Activated naive CD4-positive, alpha-beta T cell treated with anti-CD3 and anti-CD28 coated beads for 36 hours (primary cell): ENCODE measurements at regions of chr3 and their contacts with region 1.

Region 1: DNA sequence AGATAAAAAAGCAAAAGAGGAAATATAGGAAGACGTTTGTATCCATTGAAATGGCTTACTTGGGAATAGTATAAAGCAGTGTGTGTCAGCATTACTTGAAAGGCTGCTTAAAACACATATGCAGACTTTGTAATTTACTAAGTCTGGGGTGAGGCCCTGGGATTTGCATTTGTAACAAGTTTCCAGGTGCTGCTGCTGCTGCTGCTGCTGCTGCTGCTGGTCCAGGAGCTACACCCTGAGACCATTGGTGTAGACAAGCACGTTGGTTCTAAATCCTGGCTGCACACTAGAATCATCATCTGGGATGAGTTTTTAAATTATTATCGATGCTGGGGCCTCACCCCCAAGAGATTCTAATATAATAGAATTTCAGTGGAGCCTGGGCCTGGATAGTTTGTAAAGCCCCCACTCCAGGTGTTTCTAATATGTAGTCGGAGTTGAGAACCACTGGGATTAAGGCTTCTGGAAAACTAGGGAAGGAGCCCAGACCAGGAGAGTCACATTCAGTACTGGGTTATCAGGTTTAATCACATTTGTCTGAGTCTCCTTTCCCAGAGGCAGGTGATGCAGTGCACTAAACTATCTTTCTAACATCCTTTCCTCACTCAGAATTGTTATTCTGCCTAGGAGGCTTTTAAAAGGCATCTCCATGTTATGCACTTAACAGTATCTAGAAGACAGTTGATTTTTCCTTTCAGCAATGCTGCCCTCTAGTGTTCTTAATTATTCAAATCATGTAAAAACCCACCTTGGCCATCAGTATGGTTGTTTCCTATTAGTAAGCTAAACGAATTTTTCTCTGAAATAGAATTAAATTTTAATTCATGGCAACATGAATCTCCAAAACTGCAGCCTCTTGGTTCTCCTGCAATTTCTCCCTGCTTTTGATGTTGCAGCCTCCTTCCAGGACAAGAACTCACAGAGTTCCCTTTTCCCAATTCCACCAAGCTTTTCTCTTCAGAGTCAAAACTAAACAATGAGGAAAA is 45.4 kb downstream of the SSR3 start:
- DNase-seq: no peak
- H3K4me3 Mint-ChIP-seq: no peak overlapping the region
- H3K27ac Mint-ChIP-seq: no peak overlapping the region
- H3K4me1 Mint-ChIP-seq: peaks cover 15% of the 10 kb centered on the region
- H3K27me3 Mint-ChIP-seq: peaks cover 4% of the 10 kb centered on the region

Region 2: DNA sequence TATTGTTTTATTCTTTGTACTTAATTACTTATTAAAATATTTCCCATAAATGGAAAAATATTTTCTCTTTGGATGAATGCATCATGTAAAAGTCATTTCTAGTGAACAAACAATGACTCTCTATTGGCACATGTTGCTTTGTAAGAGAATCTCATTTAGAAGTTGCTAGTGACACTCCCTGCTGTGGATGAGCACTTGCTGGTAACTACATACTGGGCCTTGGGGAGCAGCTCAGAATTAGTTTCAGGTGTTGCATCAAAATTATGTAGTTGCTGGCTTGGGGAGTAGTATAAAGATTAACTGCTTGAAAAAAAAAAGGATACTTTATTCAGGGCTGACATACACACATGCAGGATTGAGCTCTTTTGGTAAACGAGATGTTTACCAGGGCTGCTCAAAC is 469.4 kb before region 1 on chr3:
- CTCF ChIA-PET with region 1: no interaction called
- intact Hi-C with region 1: loop called (anchors 1 kb)
- DNase-seq: no peak
- H3K4me3 Mint-ChIP-seq: no peak overlapping the region
- H3K27ac Mint-ChIP-seq: no peak overlapping the region
- H3K4me1 Mint-ChIP-seq: no peaks in the 10 kb centered on the region
- H3K27me3 Mint-ChIP-seq: peaks cover 6% of the 10 kb centered on the region

Region 3: GRCh38 chr3:156382458-156383346 is 126.8 kb before region 1 on chr3:
- CTCF ChIA-PET with region 1: interaction called, 5 read pairs
- intact Hi-C with region 1: loop called (anchors 2 kb)
- DNase-seq: peak; percentile 26
- H3K4me3 Mint-ChIP-seq: no peak overlapping the region
- H3K27ac Mint-ChIP-seq: no peak overlapping the region
- H3K4me1 Mint-ChIP-seq: no peaks in the 10 kb centered on the region
- H3K27me3 Mint-ChIP-seq: peaks cover 10% of the 10 kb centered on the region

Region 4: GRCh38 chr3:156472150-156472549 is 37.3 kb before region 1 on chr3:
- CTCF ChIA-PET with region 1: interaction called, 5 read pairs
- intact Hi-C with region 1: loop called (anchors 1 kb)
- DNase-seq: no peak
- H3K4me3 Mint-ChIP-seq: no peak overlapping the region
- H3K27ac Mint-ChIP-seq: no peak overlapping the region
- H3K4me1 Mint-ChIP-seq: peaks cover 1% of the 10 kb centered on the region
- H3K27me3 Mint-ChIP-seq: peaks cover 7% of the 10 kb centered on the region

Region 5: GRCh38 chr3:156536524-156537231 is 27.2 kb after region 1 on chr3:
- CTCF ChIA-PET with region 1: no interaction called
- intact Hi-C with region 1: loop called (anchors 1 kb)
- DNase-seq: no peak
- H3K4me3 Mint-ChIP-seq: no peak overlapping the region
- H3K27ac Mint-ChIP-seq: no peak overlapping the region
- H3K4me1 Mint-ChIP-seq: peaks cover 4% of the 10 kb centered on the region
- H3K27me3 Mint-ChIP-seq: no peaks in the 10 kb centered on the region

Region 6: GRCh38 chr3:157081681-157082210 is 572.3 kb after region 1 on chr3:
- CTCF ChIA-PET with region 1: interaction called, 4 read pairs
- intact Hi-C with region 1: loop called (anchors 2 kb)
- DNase-seq: peak; percentile 86
- H3K4me3 Mint-ChIP-seq: no peak overlapping the region
- H3K27ac Mint-ChIP-seq: no peak overlapping the region
- H3K4me1 Mint-ChIP-seq: peaks cover 9% of the 10 kb centered on the region
- H3K27me3 Mint-ChIP-seq: no peaks in the 10 kb centered on the region